Panc1 (cell line): ENCODE measurements at regions of chr20 and their contacts with region 1.

Region 1: GRCh38 chr20:10281911-10282310 is 63.3 kb downstream of the SNAP25 start:
- DNase-seq: no peak
- ATAC-seq: no peak
- H3K4me3 ChIP-seq: no peak overlapping the region
- H3K27ac ChIP-seq: no peak overlapping the region
- H3K4me1 ChIP-seq: no peaks in the 10 kb centered on the region
- H3K27me3 ChIP-seq: no peaks in the 10 kb centered on the region
- CTCF ChIP-seq: no peak

Region 2: GRCh38 chr20:10332656-10333415 is 50.9 kb after region 1 on chr20:
- CTCF ChIA-PET with region 1: no interaction called
- POLR2A ChIA-PET with region 1: no interaction called
- in situ Hi-C with region 1: no loop called
- intact Hi-C with region 1: no loop called
- DNase-seq: no peak
- ATAC-seq: no peak
- H3K4me3 ChIP-seq: no peak overlapping the region
- H3K27ac ChIP-seq: no peak overlapping the region
- H3K4me1 ChIP-seq: no peaks in the 10 kb centered on the region
- H3K27me3 ChIP-seq: 0 out of 2 replicates have a peak, but pooled peaks cover 2% of the 10 kb centered on the region
- CTCF ChIP-seq: no peak

Region 3: GRCh38 chr20:10352934-10353866 is 71.3 kb after region 1 on chr20:
- CTCF ChIA-PET with region 1: no interaction called
- POLR2A ChIA-PET with region 1: interaction called, 12 read pairs
- in situ Hi-C with region 1: no loop called
- intact Hi-C with region 1: no loop called
- DNase-seq: no peak
- ATAC-seq: no peak
- H3K4me3 ChIP-seq: no peak overlapping the region
- H3K27ac ChIP-seq: no peak overlapping the region
- H3K4me1 ChIP-seq: no peaks in the 10 kb centered on the region
- H3K27me3 ChIP-seq: no peaks in the 10 kb centered on the region
- CTCF ChIP-seq: no peak